RWPE1 (cell line): ENCODE measurements at regions of chr9 and their contacts with region 1.

Region 1: DNA sequence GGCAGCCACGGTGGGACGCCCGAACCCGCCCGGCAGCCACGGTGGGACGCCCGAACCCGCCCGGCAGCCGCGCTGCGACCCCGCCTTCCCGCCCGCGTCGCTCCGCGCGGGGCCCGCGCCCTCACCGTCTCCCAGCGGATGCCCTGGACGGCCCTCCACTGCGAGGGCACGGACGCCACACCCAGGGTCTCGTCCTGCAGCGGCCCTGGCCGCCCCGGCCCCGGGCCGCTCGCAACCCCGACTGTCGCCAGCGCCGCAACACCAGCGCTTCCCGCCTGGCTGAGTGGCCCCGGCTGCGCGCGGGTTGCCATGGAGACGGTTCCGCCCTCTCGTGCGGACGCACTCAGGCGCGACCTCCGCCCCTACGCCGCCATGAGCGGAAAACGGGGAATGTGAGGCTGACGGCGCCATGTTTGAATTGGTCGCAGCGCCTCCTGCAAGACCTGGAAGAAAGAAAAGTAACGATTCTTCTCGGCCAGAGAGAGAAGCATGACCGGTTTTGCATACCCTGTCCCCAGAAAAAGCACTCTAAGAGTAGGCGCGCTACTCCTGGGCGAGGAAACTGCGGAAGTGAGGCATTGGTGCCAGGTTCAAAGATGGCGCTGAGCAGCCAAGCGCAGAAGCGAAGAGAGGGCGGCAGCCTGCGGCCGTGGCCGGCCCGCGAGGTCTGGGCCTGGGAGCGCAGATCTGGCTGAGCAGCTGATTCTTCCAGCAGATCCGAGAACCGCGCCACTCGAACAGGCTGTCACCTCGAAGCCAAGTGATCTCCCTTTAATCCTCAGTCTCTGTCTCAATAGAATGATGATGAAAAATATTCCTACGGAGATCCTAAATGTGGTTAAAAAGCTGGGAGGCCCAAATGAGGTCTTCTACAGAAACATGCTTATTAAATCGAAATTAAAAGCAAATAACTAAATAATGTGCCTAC is at the start of gene DYNC2I2:
- DNase-seq: peak; percentile 98
- H3K27ac ChIP-seq: peak within 1 kb of the TSS; percentile 97
- CTCF ChIP-seq: no peak

Region 2: DNA sequence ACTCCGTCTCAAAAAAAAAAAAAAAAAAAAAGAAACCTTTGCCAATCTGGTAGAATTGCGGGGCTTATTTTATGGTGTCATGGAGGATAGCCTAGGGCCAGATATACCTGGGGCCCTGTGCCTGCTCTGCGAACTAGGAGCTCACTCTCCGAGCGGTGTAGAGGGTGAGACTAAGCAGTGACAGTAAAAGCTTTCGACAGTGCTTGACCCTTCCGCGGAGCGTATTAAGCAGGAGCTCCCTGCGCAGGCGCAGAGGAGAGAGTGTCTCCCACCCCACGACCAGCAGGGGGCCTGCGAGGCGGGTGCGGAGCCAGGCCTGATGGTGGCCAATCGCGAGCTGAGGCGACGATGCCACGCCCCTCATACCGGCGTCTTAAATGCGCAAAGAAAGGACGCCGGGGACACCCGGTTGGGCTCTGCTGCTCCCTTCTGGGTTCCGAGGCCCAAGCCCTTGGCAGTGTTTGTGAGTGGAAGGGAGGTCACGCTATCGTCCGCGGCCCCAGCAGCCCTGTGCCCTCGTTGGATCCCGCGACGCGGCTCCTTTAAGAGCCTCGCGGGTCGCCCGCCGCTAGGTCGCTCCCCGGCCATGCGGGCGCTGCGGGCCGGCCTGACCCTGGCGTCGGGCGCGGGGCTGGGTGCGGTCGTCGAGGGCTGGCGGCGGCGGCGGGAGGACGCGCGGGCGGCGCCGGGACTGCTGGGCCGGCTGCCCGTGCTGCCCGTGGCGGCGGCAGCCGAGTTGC is 161.6 kb after region 1 on chr9 and contains the start of gene ENDOG:
- CTCF ChIA-PET with region 1: no interaction called
- POLR2A ChIA-PET with region 1: no interaction called
- DNase-seq: peak; percentile 100
- H3K27ac ChIP-seq: peak within 1 kb of the TSS; percentile 87
- CTCF ChIP-seq: peak; percentile 100

Region 3: GRCh38 chr9:129028192-129028957 is 371.7 kb after region 1 on chr9 and contains the start of gene SH3GLB2:
- CTCF ChIA-PET with region 1: no interaction called
- POLR2A ChIA-PET with region 1: interaction called, 10 read pairs
- DNase-seq: peak; percentile 99
- H3K27ac ChIP-seq: peak within 1 kb of the TSS; percentile 79
- CTCF ChIP-seq: peak; percentile 100